Activated CD4-positive, alpha-beta T cell treated with anti-CD3 and anti-CD28 coated beads for 36 hours (primary cell): ENCODE measurements at regions of chr10 and their contacts with region 1.

Region 1: DNA sequence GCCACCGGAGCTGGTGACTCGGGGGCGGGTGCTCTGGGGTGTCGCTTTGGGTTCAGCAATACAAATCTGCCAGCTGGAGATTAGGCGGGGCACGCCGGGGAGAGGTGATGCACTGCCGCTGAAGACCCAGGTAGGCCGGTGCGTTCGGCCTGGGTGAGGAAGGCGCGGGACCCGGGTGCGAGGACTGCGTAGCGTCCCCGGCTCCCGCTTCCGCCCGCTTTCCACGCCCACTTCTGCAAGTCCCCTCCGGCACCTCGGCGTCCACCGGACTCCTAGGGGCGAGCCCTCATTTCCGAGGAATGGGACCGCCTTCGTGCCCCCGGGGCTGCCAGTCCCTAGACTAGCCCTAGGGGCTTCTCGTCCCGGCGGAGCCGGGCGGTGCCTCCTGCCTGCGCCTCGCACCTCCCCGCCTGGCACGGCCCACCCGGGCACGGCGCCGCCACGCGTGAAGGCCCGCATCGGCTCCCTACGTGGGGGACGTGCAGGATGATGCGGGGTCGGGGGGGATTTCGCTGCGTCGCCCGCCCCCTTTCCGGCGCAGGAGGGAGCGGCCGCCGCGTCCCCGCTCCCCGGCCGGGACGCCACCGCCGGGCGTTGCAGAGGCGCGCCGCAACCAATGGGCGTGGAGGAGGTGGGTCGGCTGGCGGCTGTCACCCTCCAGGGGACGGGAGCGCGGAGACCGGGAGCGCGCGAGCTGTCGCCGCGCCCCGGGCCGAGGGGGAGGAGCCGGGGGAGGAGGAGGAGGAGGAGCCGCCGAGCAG is 40.0 kb downstream of the HK1 start:
- DNase-seq: peak; percentile 96
- ATAC-seq: peak; percentile 88
- H3K4me3 Mint-ChIP-seq: peak overlapping the region; percentile 86
- H3K27ac Mint-ChIP-seq: peak overlapping the region; percentile 92
- H3K4me1 Mint-ChIP-seq: peaks cover 53% of the 10 kb centered on the region
- H3K27me3 Mint-ChIP-seq: no peaks in the 10 kb centered on the region

Region 2: GRCh38 chr10:68988530-68989316 is 329.6 kb before region 1 on chr10 and contains the start of gene KIFBP:
- CTCF ChIA-PET with region 1: no interaction called
- POLR2A ChIA-PET with region 1: no interaction called
- intact Hi-C with region 1: loop called in 1 of 2 experiments (anchors 2 kb)
- DNase-seq: peak; percentile 91
- ATAC-seq: peak; percentile 89
- H3K4me3 Mint-ChIP-seq: peak within 1 kb of the TSS; percentile 86
- H3K27ac Mint-ChIP-seq: peak within 1 kb of the TSS; percentile 86
- H3K4me1 Mint-ChIP-seq: peaks cover 51% of the 10 kb centered on the region
- H3K27me3 Mint-ChIP-seq: no peaks in the 10 kb centered on the region
- total RNA-seq, gene KIFBP: 12.9 to 15.6 TPM

Region 3: DNA sequence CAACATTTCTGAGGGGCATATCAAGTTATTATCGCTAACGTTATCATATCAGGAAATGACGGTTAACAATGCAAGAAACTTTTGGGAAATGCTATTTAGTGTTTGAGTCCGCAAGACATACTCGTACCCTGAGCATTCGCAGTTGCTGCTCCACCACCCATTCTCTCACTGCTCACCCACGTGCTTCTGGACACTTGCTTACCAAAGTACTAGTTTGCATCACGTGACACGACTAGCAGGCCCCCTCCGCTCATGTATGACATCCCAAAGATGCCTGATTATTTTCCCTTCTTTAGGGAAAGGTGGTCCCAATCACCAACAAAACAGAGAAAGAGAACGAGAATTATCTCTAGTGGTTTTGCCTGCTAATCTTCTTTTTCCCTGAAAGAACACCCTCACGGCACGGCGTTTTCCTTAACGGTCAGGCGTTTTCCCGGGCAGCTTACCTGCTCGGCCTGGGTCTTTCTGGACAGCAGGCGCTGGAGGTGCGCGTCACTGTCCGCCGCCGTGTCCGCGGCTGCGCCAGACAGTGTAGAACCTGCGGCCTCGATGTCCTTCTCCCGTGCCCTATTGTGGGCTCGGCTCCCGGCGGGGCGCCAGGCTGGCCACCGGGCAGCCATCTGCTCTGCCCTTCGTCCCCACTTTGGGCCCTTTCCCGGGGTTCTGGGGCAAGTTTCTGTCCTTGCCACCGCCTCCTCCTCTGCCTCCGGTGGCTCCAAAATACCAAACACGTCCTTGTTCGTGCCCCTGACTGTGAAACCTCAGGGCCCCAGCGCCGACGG is 138.4 kb before region 1 on chr10 and contains the start of gene SUPV3L1:
- CTCF ChIA-PET with region 1: no interaction called
- POLR2A ChIA-PET with region 1: no interaction called
- intact Hi-C with region 1: loop called in 1 of 2 experiments (anchors 1 kb)
- DNase-seq: peak; percentile 91
- ATAC-seq: peak; percentile 89
- H3K4me3 Mint-ChIP-seq: peak within 1 kb of the TSS; percentile 90
- H3K27ac Mint-ChIP-seq: peak within 1 kb of the TSS; percentile 100
- H3K4me1 Mint-ChIP-seq: peaks cover 38% of the 10 kb centered on the region
- H3K27me3 Mint-ChIP-seq: no peaks in the 10 kb centered on the region
- total RNA-seq, gene SUPV3L1: 46.6 to 54.1 TPM

Region 4: DNA sequence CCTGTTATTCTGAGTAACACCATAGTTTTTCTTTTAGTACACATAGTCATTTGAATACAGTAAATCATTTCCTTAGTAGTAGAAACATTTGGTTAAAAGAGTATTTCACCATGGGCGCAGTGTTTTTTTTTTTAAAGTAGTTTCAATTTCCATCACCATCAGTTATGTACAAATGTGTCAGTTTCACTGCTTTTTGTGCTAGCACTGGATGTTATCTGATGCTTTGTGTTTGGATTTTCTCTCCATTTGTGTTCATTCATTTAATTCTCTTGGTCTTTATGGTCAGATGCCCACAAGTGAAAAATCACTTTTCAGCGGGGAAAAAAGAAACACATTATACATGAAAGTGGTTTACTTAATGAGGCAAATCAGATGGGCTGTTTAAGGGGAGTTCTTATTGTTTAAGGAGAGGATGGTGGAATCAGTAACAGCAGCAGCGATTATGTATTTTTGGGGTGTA is 56.0 kb before region 1 on chr10:
- CTCF ChIA-PET with region 1: interaction called, 4 read pairs
- POLR2A ChIA-PET with region 1: no interaction called
- intact Hi-C with region 1: loop called (anchors 1 to 2 kb)
- DNase-seq: no peak
- ATAC-seq: peak; percentile 95
- H3K4me3 Mint-ChIP-seq: no peak overlapping the region
- H3K27ac Mint-ChIP-seq: peak overlapping the region; percentile 69
- H3K4me1 Mint-ChIP-seq: peaks cover 16% of the 10 kb centered on the region
- H3K27me3 Mint-ChIP-seq: no peaks in the 10 kb centered on the region

Region 5: GRCh38 chr10:69425511-69426298 is 107.4 kb after region 1 on chr10:
- CTCF ChIA-PET with region 1: no interaction called
- POLR2A ChIA-PET with region 1: no interaction called
- intact Hi-C with region 1: no loop called
- DNase-seq: no peak
- ATAC-seq: peak; percentile 55
- H3K4me3 Mint-ChIP-seq: no peak overlapping the region
- H3K27ac Mint-ChIP-seq: peak overlapping the region; percentile 3
- H3K4me1 Mint-ChIP-seq: peaks cover 40% of the 10 kb centered on the region
- H3K27me3 Mint-ChIP-seq: no peaks in the 10 kb centered on the region

Region 6: GRCh38 chr10:69451209-69451783 is 133.0 kb after region 1 on chr10 and contains the start of gene TSPAN15:
- CTCF ChIA-PET with region 1: no interaction called
- POLR2A ChIA-PET with region 1: no interaction called
- intact Hi-C with region 1: loop called in 1 of 2 experiments (anchors 2 kb)
- DNase-seq: peak; percentile 87
- ATAC-seq: peak; percentile 96
- H3K4me3 Mint-ChIP-seq: peak within 1 kb of the TSS; percentile 75
- H3K27ac Mint-ChIP-seq: no peak within 1 kb of the TSS
- H3K4me1 Mint-ChIP-seq: peaks cover 13% of the 10 kb centered on the region
- H3K27me3 Mint-ChIP-seq: peaks cover 4% of the 10 kb centered on the region
- total RNA-seq, gene TSPAN15: 0.85 to 0.91 TPM